ENCODE measurements at regions of chr1 and their contacts with region 1.

Region 1: GRCh38 chr1:9494929-9495758 is 44.1 kb upstream of the SLC25A33 start:
- DNase-seq: no peak
- ATAC-seq: peak; percentile 42 to 73
- H3K4me3 ChIP-seq: peak overlapping the region in 3 of 4 donors; percentile 40 to 48 (median 42)
- H3K27ac ChIP-seq: no peak overlapping the region
- H3K4me1 ChIP-seq: peaks cover 0 to 6% of the 10 kb centered on the region in 2 donors
- H3K27me3 ChIP-seq: no peaks in the 10 kb centered on the region
- CTCF ChIP-seq: peak; percentile 94 to 99 (median 99)
- POLR2A ChIP-seq: no peak

Region 2: DNA sequence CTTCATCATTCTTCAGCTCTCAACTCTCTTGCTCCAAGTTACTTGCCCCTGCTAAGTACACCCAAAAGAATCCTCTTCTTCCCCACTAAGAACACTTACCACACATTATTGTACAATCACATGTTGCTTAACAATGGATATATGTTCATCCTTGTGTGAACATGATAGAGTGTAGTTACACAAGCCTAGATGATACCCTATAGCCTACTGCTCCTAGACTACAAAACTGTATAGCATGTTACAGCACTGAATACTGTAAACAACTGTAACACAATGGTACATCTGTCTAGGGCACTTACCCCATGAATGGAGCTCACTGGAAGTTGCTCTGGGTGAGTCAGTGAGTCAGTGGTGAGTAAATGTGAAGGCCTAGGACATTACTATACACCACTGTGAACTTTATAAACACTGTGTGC is 755.1 kb before region 1 on chr1:
- in situ Hi-C with region 1: no loop called
- intact Hi-C with region 1: no loop called
- DNase-seq: no peak
- ATAC-seq: no peak
- H3K4me3 ChIP-seq: no peak overlapping the region
- H3K27ac ChIP-seq: no peak overlapping the region
- H3K4me1 ChIP-seq: no peaks in the 10 kb centered on the region
- H3K27me3 ChIP-seq: no peaks in the 10 kb centered on the region
- CTCF ChIP-seq: no peak
- POLR2A ChIP-seq: no peak

Region 3: GRCh38 chr1:9110669-9111356 is 384.3 kb before region 1 on chr1:
- in situ Hi-C with region 1: loop called in 1 of 4 experiments (anchors 10 kb)
- intact Hi-C with region 1: no loop called
- DNase-seq: peak; percentile 69 to 83
- ATAC-seq: peak; percentile 22 to 42
- H3K4me3 ChIP-seq: no peak overlapping the region
- H3K27ac ChIP-seq: peak overlapping the region in 1 of 4 donors; percentile 18
- H3K4me1 ChIP-seq: peaks cover 0 to 4% of the 10 kb centered on the region in 2 donors
- H3K27me3 ChIP-seq: no peaks in the 10 kb centered on the region
- CTCF ChIP-seq: peak; percentile 92 to 96 (median 94)
- POLR2A ChIP-seq: no peak

Region 4: GRCh38 chr1:9181176-9181906 is 313.8 kb before region 1 on chr1:
- in situ Hi-C with region 1: no loop called
- intact Hi-C with region 1: loop called (anchors 2 kb)
- DNase-seq: peak in 1 of 2 donors; percentile 52
- ATAC-seq: peak; percentile 44 to 84
- H3K4me3 ChIP-seq: peak overlapping the region; percentile 60 to 76 (median 64)
- H3K27ac ChIP-seq: no peak overlapping the region
- H3K4me1 ChIP-seq: peaks cover 0 to 3% of the 10 kb centered on the region in 2 donors
- H3K27me3 ChIP-seq: peaks cover 0 to 8% (median 8%) of the 10 kb centered on the region in 3 donors
- CTCF ChIP-seq: peak; percentile 70 to 97 (median 94)
- POLR2A ChIP-seq: no peak

Region 5: DNA sequence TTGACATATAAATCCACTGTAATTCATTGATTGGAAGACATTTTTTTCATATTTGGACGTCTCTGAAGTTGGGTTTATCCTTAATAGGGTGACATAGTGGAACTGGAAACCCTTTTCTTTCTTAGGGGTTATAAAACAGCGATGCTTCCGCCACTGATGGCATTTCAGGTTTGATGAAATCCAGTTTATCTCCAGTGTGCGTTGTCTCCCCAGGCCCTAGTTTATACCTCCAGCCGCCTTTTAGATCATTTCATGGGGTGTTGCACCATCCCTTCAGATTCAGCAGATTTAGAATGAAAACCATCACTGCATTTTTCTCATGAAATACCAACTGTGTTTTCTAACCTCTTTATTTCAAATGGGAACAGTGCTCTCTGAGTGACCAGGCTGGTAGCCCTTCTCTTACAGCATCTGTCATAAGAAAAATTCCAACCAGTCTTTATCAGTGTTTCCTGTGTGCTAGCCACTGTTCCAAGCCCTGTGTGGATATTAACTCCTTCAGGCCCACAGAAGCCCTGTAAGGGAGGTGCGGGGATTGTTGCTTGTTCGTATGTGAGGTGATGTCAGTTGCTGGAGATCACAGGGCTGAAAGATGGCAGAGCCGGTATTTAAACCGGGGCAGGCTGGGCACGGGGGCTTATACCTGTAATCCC is 241.6 kb before region 1 on chr1:
- in situ Hi-C with region 1: no loop called
- intact Hi-C with region 1: no loop called
- DNase-seq: no peak
- ATAC-seq: no peak
- H3K4me3 ChIP-seq: no peak overlapping the region
- H3K27ac ChIP-seq: peak overlapping the region; percentile 86 to 99 (median 92)
- H3K4me1 ChIP-seq: peaks cover 74 to 80% of the 10 kb centered on the region in 2 donors
- H3K27me3 ChIP-seq: no peaks in the 10 kb centered on the region
- CTCF ChIP-seq: no peak
- POLR2A ChIP-seq: no peak

Region 6: GRCh38 chr1:9292361-9293240 is 202.5 kb before region 1 on chr1 and contains the start of gene SPSB1:
- in situ Hi-C with region 1: loop called in 1 of 4 experiments (anchors 5 kb)
- intact Hi-C with region 1: loop called (anchors 1 kb)
- DNase-seq: peak; percentile 62 to 67
- ATAC-seq: peak; percentile 46 to 48
- H3K4me3 ChIP-seq: peak within 1 kb of the TSS; percentile 67 to 98 (median 86)
- H3K27ac ChIP-seq: peak within 1 kb of the TSS; percentile 80 to 95 (median 90)
- H3K4me1 ChIP-seq: peaks cover 18 to 39% of the 10 kb centered on the region in 2 donors
- H3K27me3 ChIP-seq: no peaks in the 10 kb centered on the region
- CTCF ChIP-seq: no peak
- POLR2A ChIP-seq: peak; percentile 95 to 97
- total RNA-seq, gene SPSB1: 40.4 to 161 (median 56.6) TPM

Region 7: DNA sequence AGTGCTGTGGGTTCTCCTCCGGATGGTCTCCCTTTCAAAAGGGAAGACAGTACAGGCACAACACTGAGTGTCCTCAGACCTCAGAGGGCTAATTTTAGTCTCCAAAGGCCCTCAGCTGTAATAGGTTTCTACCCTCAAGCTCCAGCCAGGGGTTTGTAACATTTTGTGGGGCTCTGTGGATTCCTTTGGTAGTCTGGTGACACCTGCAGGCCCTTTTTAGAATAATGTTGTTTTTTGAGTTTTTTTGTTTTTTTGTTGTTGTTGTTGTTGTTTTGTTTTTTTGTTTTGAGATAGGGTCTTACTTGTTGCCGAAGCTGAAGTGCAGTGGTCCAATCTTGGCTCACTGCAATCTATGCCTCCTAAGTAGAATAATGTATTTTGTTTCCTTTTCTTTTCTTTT is 78.6 kb after region 1 on chr1:
- in situ Hi-C with region 1: loop called in 3 of 4 experiments (anchors 5 kb)
- intact Hi-C with region 1: loop called (anchors 1 kb)
- DNase-seq: no peak
- ATAC-seq: peak in 1 of 2 donors; percentile 45
- H3K4me3 ChIP-seq: no peak overlapping the region
- H3K27ac ChIP-seq: peak overlapping the region in 2 of 4 donors; percentile 1 to 43
- H3K4me1 ChIP-seq: peaks cover 11 to 20% of the 10 kb centered on the region in 2 donors
- H3K27me3 ChIP-seq: no peaks in the 10 kb centered on the region
- CTCF ChIP-seq: peak in 4 of 5 experiments; percentile 13 to 42 (median 32)
- POLR2A ChIP-seq: no peak

Measured in gastrocnemius medialis (tissue), 4 donors.